A673 (cell line): ENCODE measurements at regions of chr12 and their contacts with region 1.

Region 1: DNA sequence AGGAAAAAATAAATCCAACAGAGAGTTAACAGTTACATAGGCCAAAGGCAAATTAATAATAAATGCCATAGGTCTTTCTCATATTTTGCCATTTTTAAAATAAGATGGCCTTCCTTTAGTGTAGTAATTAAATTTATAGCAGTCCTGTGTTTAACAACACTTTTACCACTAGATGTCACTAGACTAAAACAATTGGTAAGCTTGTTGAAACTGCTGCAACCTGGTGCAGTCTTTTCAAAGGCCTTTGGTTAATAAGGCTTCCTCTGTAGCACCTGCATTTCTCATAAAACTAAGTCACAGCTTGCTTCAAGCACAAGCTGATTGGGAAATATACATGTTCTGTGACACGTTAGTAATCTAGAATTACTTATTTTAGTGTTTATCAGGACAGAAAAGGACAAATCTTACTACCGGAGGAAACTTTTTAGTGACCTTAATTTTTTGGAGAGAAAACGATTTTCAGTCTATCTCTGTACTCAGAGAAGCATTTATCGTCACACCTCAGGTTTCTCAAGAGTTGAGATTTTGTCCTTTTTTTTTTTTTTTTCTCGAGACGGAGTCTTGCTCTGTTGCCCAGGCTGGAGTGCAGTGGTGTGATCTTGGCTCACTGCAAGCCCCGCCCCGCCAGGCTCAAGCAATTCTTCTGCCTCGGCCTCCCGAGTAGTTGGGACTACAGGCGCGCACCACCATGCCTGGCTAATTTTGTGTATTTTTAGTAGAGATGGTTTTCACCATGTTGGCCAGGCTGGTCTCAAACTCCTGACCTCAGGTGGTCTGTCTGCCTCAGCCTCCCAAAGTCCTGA is 20.0 kb downstream of the BORCS5 start:
- DNase-seq: peak; percentile 82
- H3K4me3 ChIP-seq: no peak overlapping the region
- H3K27ac ChIP-seq: no peak overlapping the region
- H3K4me1 ChIP-seq: no peaks in the 10 kb centered on the region
- H3K27me3 ChIP-seq: no peaks in the 10 kb centered on the region
- CTCF ChIP-seq: peak; percentile 77

Region 2: GRCh38 chr12:11162502-11162901 is 1214.3 kb before region 1 on chr12:
- CTCF ChIA-PET with region 1: no interaction called
- POLR2A ChIA-PET with region 1: no interaction called
- intact Hi-C with region 1: no loop called
- DNase-seq: no peak
- H3K4me3 ChIP-seq: no peak overlapping the region
- H3K27ac ChIP-seq: no peak overlapping the region
- H3K4me1 ChIP-seq: no peaks in the 10 kb centered on the region
- H3K27me3 ChIP-seq: no peaks in the 10 kb centered on the region
- CTCF ChIP-seq: no peak

Region 3: GRCh38 chr12:12564911-12565310 is 188.1 kb after region 1 on chr12:
- CTCF ChIA-PET with region 1: interaction called, 5 read pairs
- POLR2A ChIA-PET with region 1: no interaction called
- intact Hi-C with region 1: loop called (anchors 2 kb)
- DNase-seq: no peak
- H3K4me3 ChIP-seq: no peak overlapping the region
- H3K27ac ChIP-seq: no peak overlapping the region
- H3K4me1 ChIP-seq: no peaks in the 10 kb centered on the region
- H3K27me3 ChIP-seq: no peaks in the 10 kb centered on the region
- CTCF ChIP-seq: no peak

Region 4: DNA sequence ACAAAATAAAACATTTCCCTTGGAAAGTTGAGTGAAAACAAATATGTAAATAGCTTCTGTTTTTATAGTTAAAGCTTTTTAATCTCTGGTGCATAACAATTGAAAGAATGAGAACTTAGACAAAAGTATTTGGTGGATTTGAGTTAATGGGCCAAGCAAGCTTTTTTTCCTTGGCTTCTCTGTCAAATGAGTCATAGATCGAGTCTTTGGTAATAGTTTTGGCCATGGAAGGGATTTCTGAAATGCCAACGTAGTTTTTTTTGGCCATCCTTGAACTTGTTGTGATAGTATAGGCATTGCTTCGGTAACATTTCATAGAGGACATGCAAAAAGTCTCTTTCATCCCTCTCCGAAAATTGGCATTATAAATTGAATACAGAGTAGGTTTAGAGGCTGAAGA is 284.2 kb after region 1 on chr12:
- CTCF ChIA-PET with region 1: interaction called, 7 read pairs
- POLR2A ChIA-PET with region 1: no interaction called
- intact Hi-C with region 1: loop called (anchors 1 kb)
- DNase-seq: no peak
- H3K4me3 ChIP-seq: no peak overlapping the region
- H3K27ac ChIP-seq: no peak overlapping the region
- H3K4me1 ChIP-seq: no peaks in the 10 kb centered on the region
- H3K27me3 ChIP-seq: no peaks in the 10 kb centered on the region
- CTCF ChIP-seq: no peak

Region 5: DNA sequence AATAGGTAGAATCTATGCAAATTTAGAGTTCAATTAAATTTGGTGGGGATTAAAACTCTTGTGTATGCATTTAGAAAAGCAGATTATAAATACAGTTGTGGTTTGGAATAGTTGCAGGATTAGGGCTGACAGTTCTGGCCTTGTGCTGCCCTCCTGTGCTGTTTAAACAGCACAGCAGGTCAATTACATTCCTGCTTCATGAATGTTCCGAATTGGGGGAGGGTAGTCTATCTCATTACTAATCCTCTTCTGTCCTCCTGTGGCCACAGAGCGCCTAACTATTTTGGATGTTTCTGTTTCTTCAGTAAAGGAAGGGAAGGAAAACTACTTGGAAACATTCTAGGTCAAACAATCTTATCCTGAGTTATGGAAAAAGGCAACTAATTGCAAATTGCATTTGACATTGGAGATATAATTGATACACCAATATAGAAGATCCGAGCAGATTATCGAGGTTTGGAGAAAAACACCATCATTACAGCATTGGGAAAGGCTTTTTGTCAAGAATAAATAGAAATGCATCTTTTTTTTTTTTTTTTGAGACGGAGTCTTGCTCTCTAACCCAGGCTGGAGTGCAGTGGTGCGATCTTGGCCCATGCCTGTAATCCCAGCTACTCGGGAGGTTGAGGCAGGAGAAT is 327.9 kb after region 1 on chr12:
- CTCF ChIA-PET with region 1: interaction called, 3 read pairs
- POLR2A ChIA-PET with region 1: interaction called, 13 read pairs
- intact Hi-C with region 1: loop called (anchors 1 kb)
- DNase-seq: peak; percentile 92
- H3K4me3 ChIP-seq: no peak overlapping the region
- H3K27ac ChIP-seq: no peak overlapping the region
- H3K4me1 ChIP-seq: peaks cover 12% of the 10 kb centered on the region
- H3K27me3 ChIP-seq: no peaks in the 10 kb centered on the region
- CTCF ChIP-seq: peak; percentile 89